Panc1 (cell line): ENCODE measurements at regions of chr1 and their contacts with region 1.

Region 1: DNA sequence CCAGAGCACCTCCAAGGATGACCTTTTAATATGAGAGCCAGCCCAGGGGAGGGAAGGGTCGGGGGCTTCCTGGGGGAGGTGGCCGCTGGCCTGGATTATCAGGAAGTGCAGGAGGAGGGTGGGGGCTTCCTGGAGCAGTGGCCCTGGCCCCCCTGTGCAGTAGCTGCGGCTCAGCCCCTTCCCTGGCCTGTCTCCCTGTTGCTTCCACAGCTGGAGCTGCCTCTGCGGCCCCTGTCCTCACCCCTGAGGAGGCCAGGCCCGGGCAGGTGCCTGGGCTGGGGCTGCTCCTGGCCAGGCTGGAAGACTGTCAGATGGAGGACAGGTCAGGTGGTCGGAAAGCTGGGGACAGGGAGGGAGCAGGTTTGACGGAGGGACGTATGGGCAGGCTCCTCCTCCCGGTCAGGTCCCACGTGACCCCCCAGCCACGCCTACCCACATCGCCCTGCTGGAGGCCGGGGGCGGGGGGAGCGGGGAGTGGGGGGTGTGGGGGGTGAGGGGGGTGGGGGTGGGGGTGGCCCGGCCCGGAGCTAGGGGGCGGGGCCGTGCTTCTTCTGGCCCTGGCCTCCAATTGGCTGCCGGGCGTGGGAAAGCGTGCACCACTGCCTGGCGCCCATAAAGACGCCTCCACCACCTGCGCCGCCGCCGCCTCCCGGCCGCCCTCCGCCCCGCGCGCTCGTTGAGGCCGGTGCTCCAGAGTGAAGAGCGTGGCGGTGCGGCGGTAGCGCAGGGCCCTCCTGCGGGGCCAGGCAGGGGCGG is 10.2 kb upstream of the TNFRSF14 start:
- DNase-seq: no peak
- ATAC-seq: peak; percentile 64
- H3K4me3 ChIP-seq: peak overlapping the region; percentile 60 to 76
- H3K27ac ChIP-seq: peak overlapping the region; percentile 79
- H3K4me1 ChIP-seq: peaks cover 57% of the 10 kb centered on the region
- H3K27me3 ChIP-seq: no peaks in the 10 kb centered on the region
- CTCF ChIP-seq: no peak

Region 2: GRCh38 chr1:2412519-2413233 is 133.3 kb before region 1 on chr1 and contains the start of gene PEX10:
- CTCF ChIA-PET with region 1: interaction called, 3 read pairs
- POLR2A ChIA-PET with region 1: no interaction called
- in situ Hi-C with region 1: no loop called
- intact Hi-C with region 1: loop called (anchors 2 kb)
- DNase-seq: peak; percentile 72
- ATAC-seq: peak; percentile 89
- H3K4me3 ChIP-seq: peak within 1 kb of the TSS; percentile 86 to 87
- H3K27ac ChIP-seq: peak within 1 kb of the TSS; percentile 91
- H3K4me1 ChIP-seq: peaks cover 19% of the 10 kb centered on the region
- H3K27me3 ChIP-seq: no peaks in the 10 kb centered on the region
- CTCF ChIP-seq: no peak
- total RNA-seq, gene PEX10: 49.8 TPM

Region 3: DNA sequence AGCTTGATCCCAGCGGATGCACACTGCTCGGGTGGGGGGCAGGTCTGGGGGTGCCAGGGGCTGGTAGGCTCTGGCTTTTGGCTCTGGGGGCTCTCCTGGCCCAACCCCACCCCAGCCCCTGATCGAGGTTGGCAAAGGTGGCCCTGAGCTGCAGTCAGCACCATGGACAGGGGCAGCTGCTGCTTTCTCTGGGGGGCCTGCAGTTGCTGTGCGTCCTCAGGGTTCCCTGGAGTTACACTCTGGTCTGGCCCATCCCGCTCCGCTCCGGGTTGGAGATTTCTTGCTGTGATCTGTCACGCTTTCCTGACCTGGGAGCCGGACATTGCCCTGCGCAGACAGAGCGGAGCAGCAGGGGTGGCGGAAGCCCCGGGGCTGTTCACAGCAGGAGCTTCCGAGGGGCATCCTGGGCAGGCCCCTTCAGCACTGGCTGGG is 77.9 kb before region 1 on chr1:
- CTCF ChIA-PET with region 1: interaction called, 8 read pairs
- POLR2A ChIA-PET with region 1: no interaction called
- in situ Hi-C with region 1: no loop called
- intact Hi-C with region 1: loop called (anchors 10 kb)
- DNase-seq: no peak
- ATAC-seq: peak; percentile 11
- H3K4me3 ChIP-seq: peak overlapping the region; percentile 51 to 67
- H3K27ac ChIP-seq: peak overlapping the region; percentile 71; the same call in 1 of the 2 replicates
- H3K4me1 ChIP-seq: peaks cover 91% of the 10 kb centered on the region
- H3K27me3 ChIP-seq: no peaks in the 10 kb centered on the region
- CTCF ChIP-seq: no peak